ENCODE measurements at regions of chr17 and their contacts with region 1.

Region 1: DNA sequence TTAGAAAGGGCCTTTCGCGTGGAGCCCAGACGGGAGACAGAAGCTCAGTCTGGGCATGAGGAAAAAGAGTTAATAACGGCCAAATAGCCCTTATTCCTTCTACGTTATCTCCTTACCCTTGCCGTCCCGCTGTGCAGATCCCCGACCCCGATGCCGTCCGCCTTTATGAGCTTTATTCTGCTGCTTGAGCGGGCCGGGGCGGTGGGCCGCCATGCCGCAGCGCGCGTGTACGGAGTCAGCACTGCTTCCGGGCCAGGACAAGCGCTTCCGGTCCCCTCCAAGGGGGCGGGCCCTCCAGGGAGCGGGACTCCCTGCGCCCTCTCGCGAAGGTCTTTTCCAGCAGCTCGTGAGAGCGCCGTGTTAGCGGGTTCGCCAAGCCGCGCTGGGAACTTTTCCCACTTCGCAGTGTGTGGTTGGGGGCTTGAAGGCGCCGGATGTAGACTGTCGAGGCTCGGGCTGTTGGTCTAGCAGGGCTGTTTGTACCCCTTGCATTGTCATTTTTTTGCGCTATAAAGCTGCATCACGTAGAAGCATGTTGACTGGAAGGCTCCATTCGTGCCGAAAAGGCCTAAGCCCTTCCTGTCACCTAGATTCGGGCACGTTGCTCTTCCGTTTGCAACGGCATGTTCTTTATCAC is at the start of gene TSR1:
- DNase-seq: peak; percentile 94
- H3K4me3 Mint-ChIP-seq: peak within 1 kb of the TSS; percentile 100
- H3K27ac Mint-ChIP-seq: peak within 1 kb of the TSS; percentile 90
- H3K4me1 Mint-ChIP-seq: peaks cover 14% of the 10 kb centered on the region
- H3K27me3 Mint-ChIP-seq: no peaks in the 10 kb centered on the region
- total RNA-seq, gene TSR1: 55.1 to 55.9 TPM

Region 2: DNA sequence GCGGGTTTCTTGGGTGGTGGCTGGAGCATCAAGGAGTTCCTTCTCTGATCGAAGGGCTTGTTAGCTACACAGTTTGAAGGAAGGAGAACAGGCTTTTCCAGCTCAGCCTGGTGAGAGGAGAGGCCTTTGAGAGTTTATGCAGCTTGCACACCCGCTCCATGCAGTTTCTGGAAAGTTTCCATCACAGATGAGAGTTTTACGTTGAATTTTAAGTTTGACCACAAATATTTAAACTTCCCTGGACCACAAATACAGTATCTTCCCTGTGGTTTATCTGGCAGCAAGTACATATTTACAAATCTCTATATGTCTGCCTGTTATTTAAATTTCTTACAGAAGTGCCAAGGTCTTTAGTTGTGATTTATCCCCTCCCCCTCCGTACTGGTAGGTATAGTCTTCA is 224.6 kb before region 1 on chr17:
- CTCF ChIA-PET with region 1: no interaction called
- POLR2A ChIA-PET with region 1: no interaction called
- intact Hi-C with region 1: no loop called
- DNase-seq: no peak
- H3K4me3 Mint-ChIP-seq: no peak overlapping the region
- H3K27ac Mint-ChIP-seq: no peak overlapping the region
- H3K4me1 Mint-ChIP-seq: peaks cover 16% of the 10 kb centered on the region
- H3K27me3 Mint-ChIP-seq: no peaks in the 10 kb centered on the region

Region 3: DNA sequence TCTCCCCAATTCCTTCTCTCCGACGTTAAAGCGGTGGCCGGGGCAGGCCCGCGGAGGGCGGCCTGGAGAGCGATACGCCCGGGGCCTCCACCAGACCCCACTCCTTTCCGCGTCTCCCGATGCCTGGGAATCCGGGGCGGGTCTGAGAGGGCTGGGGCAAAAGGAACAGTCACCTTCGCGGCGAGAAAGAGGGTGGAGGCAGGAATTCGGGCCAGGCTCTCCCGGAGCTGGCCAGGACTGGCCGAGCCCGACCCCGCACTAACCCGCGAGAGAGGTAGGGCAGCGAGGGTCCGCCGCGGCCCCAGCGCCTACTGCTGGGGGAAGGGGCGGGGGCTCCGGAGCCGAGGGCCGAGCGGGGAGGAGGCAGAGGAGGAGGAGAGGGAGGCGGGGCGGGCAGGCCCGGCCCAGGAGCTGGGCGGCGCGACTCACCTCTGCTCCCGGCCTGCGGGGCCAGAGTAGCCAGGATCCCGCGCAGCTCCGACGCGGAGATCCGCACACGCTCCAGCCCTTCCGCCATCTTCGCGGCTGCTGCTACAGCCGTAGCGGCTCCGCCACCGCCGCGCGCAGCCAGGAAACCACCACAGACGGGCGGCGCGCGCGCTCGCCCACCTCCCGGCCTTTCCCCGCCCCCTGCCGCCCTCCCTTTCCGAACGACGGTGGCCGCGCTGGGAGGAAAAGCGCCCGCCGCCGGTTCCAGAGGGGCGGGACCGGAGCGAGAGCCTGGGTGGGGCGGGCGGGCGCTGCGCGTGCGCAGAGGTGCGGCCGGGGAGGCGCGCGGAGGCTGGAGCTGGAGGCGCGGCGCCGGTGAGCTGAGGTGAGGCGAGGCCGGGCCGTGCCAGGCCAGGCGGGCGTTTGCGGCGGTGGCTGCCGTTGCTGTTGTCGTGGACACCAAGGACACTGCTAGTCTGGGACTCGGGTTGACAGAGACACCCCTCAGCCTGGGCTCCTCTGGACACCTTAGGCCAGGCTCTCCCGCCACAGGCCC is 32.8 kb before region 1 on chr17 and contains the starts of genes SMG6 and SRR:
- CTCF ChIA-PET with region 1: no interaction called
- POLR2A ChIA-PET with region 1: interaction called, 24 read pairs
- intact Hi-C with region 1: loop called (anchors 2 kb)
- DNase-seq: peak; percentile 96
- H3K4me3 Mint-ChIP-seq: peak within 1 kb of the TSS; percentile 90
- H3K27ac Mint-ChIP-seq: peak within 1 kb of the TSS; percentile 75
- H3K4me1 Mint-ChIP-seq: peaks cover 46% of the 10 kb centered on the region
- H3K27me3 Mint-ChIP-seq: no peaks in the 10 kb centered on the region
- total RNA-seq, gene SMG6: 17.2 to 20.3 TPM
- total RNA-seq, gene SRR: 20.0 to 22.2 TPM

Region 4: DNA sequence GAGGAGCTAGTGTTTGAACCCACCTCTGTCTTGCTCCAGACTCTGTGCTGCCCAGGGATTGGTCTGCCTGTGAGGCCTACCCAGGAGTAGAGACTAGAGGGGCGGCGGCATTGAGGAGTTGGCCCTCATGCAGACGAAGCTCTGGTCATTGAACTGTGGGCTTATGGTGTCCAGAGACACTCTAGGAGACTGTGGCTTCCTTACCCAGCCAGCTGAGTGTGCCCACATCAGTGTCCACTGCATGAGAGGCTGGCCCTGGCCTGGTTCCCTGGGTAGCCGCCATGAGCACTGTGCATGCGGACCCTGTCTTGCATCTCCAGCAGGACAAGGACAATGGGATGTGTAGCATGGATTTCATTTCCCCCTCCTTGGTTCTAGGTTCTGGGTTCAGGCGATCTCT is 14.9 kb after region 1 on chr17:
- CTCF ChIA-PET with region 1: interaction called, 15 read pairs
- POLR2A ChIA-PET with region 1: no interaction called
- intact Hi-C with region 1: no loop called
- DNase-seq: no peak
- H3K4me3 Mint-ChIP-seq: no peak overlapping the region
- H3K27ac Mint-ChIP-seq: no peak overlapping the region
- H3K4me1 Mint-ChIP-seq: peaks cover 17% of the 10 kb centered on the region
- H3K27me3 Mint-ChIP-seq: no peaks in the 10 kb centered on the region

Region 5: DNA sequence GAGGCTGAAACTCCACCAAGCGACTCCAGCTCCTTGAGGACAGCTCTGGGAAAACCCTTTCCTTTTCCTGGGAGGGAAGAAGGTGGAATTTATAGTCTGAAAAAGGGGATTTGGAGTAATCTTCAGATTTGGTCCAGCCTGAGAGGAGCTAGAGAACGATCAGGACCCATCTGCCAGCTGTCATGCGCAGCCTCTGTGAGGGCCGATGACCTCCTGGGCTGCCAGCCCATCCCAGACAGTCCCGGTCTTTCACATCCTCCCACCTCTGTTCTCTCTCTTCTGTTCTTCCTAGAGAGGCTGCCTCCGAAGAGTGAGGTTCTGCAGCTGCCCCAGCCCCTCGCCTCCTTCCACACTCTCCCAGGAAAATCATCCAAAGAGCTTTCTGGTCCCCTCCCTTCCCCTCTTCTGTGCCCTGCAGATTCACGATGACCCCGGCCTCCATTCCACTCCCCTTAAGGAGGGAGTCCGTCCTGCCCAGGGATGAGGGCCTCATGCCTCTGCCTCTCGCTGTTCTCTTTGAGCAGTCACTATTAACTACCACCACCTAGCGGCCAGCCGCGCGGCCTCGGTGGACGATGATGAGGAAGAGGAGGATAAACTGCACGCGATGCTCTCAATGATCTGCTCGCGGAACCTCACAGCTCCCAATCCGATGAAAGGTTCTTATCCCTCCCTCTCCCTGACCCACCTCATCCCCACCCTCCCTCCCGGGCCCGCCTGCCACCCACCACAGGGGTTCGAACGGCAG is 30.6 kb after region 1 on chr17:
- CTCF ChIA-PET with region 1: no interaction called
- POLR2A ChIA-PET with region 1: no interaction called
- intact Hi-C with region 1: no loop called
- DNase-seq: no peak
- H3K4me3 Mint-ChIP-seq: no peak overlapping the region
- H3K27ac Mint-ChIP-seq: no peak overlapping the region
- H3K4me1 Mint-ChIP-seq: no peaks in the 10 kb centered on the region
- H3K27me3 Mint-ChIP-seq: no peaks in the 10 kb centered on the region

Region 6: DNA sequence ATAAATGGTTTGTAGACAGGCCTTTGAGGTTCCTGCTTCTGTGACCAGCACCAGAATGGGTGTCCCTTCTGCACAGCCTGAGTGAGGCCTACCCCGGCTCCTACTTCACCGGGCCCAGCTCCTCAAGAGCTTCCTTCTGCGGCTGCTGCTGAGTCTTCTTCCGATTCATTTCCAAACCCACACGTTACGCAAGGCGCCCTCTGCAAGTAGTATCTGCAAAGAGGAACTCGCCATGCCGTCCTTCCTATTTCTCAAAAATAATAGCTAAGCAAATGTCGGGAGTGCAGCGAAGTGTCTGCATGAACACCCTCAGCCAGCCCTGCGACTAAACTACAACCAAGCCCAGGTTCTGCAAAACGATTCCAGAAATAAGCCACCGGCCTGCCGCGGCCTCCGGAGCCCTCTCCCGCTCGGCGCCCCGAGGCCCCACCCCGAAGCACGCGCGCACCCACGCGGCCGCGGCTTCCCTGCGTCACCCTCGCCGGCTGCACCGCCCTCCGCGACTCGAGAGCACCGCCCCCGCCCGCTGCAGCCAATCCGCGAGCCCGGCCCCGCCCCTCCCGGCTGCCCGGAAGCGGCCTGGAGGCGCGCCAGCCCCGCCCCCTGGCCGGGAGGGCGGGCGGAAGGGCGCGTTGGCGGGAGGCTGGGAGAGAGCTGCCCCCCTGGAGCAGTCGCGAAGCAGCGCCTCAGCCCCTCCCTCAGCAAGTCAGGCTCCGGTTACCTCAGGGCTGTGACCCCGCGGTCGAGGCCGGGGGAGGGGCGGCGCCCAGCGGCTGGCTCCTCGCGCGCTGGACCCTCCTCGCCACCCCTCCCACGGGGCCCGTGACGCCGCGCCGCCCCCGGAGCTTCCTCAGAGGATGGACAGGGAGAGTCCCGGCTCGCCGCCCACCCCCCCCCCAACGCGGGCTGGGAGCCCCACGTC is 56.2 kb after region 1 on chr17:
- CTCF ChIA-PET with region 1: interaction called, 6 read pairs
- POLR2A ChIA-PET with region 1: interaction called, 9 read pairs
- intact Hi-C with region 1: loop called (anchors 5 kb)
- DNase-seq: peak; percentile 98
- H3K4me3 Mint-ChIP-seq: peak overlapping the region; percentile 88
- H3K27ac Mint-ChIP-seq: peak overlapping the region; percentile 93
- H3K4me1 Mint-ChIP-seq: peaks cover 54% of the 10 kb centered on the region
- H3K27me3 Mint-ChIP-seq: no peaks in the 10 kb centered on the region

Measured in activated CD4-positive, alpha-beta memory T cell treated with anti-CD3 and anti-CD28 coated beads for 36 hours (primary cell).